OCI-LY7 (cell line): ENCODE measurements at regions of chr9 and their contacts with region 1.

Region 1: GRCh38 chr9:71795097-71795813 is 26.9 kb upstream of the CEMIP2 start:
- DNase-seq: peak; percentile 95
- H3K4me3 ChIP-seq: peak overlapping the region; percentile 49
- H3K27ac ChIP-seq: peak overlapping the region; percentile 83
- H3K4me1 ChIP-seq: peaks cover 41% of the 10 kb centered on the region
- CTCF ChIP-seq: no peak

Region 2: GRCh38 chr9:71778085-71778484 is 17.2 kb before region 1 on chr9:
- CTCF ChIA-PET with region 1: interaction called, 11 read pairs
- POLR2A ChIA-PET with region 1: interaction called, 10 read pairs
- intact Hi-C with region 1: loop called (anchors 1 kb)
- DNase-seq: no peak
- H3K4me3 ChIP-seq: no peak overlapping the region
- H3K27ac ChIP-seq: no peak overlapping the region
- H3K4me1 ChIP-seq: peaks cover 13% of the 10 kb centered on the region
- CTCF ChIP-seq: no peak

Region 3: GRCh38 chr9:71783120-71783530 is 12.1 kb before region 1 on chr9:
- CTCF ChIA-PET with region 1: interaction called, 11 read pairs
- POLR2A ChIA-PET with region 1: interaction called, 5 read pairs
- intact Hi-C with region 1: loop called (anchors 1 kb)
- DNase-seq: peak; percentile 75
- H3K4me3 ChIP-seq: peak overlapping the region; percentile 31
- H3K27ac ChIP-seq: no peak overlapping the region
- H3K4me1 ChIP-seq: peaks cover 13% of the 10 kb centered on the region
- CTCF ChIP-seq: peak; percentile 60

Region 4: GRCh38 chr9:71806901-71807307 is 11.6 kb after region 1 on chr9:
- CTCF ChIA-PET with region 1: interaction called, 5 read pairs
- POLR2A ChIA-PET with region 1: interaction called, 14 read pairs
- intact Hi-C with region 1: no loop called
- DNase-seq: peak; percentile 88
- H3K4me3 ChIP-seq: no peak overlapping the region
- H3K27ac ChIP-seq: no peak overlapping the region
- H3K4me1 ChIP-seq: peaks cover 3% of the 10 kb centered on the region
- CTCF ChIP-seq: peak; percentile 99

Region 5: DNA sequence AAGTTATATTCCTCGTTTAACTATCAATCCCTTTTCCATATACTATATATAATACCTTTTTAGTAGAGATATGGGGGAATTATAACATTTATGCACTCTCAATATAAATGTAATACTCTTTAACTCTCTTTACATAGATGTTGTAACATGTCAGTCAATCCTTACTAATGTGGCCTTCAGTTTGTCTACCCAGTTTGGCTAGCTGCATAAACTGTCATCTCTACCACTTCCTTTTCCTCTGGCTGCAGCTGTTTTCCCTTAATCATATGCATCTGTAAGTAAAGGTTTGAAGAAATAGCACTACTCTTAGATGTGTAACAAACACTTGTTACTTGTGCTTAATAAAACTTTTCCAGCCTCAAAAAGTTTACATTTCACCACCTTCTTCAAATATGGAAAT is 102.3 kb after region 1 on chr9:
- CTCF ChIA-PET with region 1: no interaction called
- POLR2A ChIA-PET with region 1: interaction called, 6 read pairs
- intact Hi-C with region 1: loop called (anchors 5 kb)
- DNase-seq: peak; percentile 81
- H3K4me3 ChIP-seq: peak overlapping the region; percentile 53
- H3K27ac ChIP-seq: peak overlapping the region; percentile 99
- H3K4me1 ChIP-seq: peaks cover 90% of the 10 kb centered on the region
- CTCF ChIP-seq: no peak

Region 6: GRCh38 chr9:71911253-71912074 is 116.2 kb after region 1 on chr9 and contains the start of gene C9orf85:
- CTCF ChIA-PET with region 1: interaction called, 3 read pairs
- POLR2A ChIA-PET with region 1: interaction called, 6 read pairs
- intact Hi-C with region 1: loop called (anchors 2 kb)
- DNase-seq: peak; percentile 100
- H3K4me3 ChIP-seq: peak within 1 kb of the TSS; percentile 93
- H3K27ac ChIP-seq: peak within 1 kb of the TSS; percentile 83
- H3K4me1 ChIP-seq: peaks cover 32% of the 10 kb centered on the region
- CTCF ChIP-seq: no peak
- total RNA-seq, gene C9orf85: 5.6 and 8.7 TPM in 2 replicates

Region 7: GRCh38 chr9:72356041-72356582 is 560.9 kb after region 1 on chr9:
- CTCF ChIA-PET with region 1: no interaction called
- POLR2A ChIA-PET with region 1: no interaction called
- intact Hi-C with region 1: loop called (anchors 5 kb)
- DNase-seq: no peak
- H3K4me3 ChIP-seq: no peak overlapping the region
- H3K27ac ChIP-seq: no peak overlapping the region
- H3K4me1 ChIP-seq: no peaks in the 10 kb centered on the region
- CTCF ChIP-seq: no peak